ENCODE measurements at regions of chr6 and their contacts with region 1.

Region 1: DNA sequence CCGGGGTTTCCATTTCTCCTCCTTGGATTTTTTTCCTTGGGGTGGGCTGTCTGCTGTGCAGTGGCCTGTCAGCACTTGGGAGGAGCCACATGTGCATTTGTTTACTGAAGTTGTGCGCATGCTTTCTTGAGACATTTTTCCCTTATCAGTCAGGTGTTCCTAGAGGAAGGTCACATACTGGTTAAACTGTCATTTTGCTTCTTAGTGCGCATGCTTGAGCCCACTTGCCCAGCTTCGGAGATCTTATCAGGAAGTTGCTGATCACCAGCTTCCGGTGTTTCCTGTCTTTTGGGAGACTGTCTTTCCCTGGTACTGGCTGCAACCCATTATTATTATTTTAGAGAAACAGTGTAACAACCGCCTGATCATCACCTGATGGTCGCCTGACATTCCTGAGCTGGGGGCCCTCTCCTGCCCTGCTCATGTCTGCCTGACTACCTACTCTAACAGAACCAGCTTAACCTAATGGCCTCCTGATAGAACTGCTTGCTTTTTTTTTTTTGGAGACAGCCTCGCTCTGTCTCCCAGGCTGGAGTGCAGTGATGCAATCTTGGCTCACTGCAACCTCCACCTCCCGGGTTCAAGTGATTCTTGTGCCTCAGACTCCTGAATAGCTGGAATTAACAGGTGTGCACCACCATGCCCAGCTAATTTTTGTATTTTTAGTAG is 378 bp upstream of the ERVFRD-1 start:
- DNase-seq: no peak
- CTCF ChIP-seq: no peak

Region 2: GRCh38 chr6:11093589-11094410 is 18.1 kb before region 1 on chr6 and contains the start of gene SMIM13:
- CTCF ChIA-PET with region 1: interaction called, 13 read pairs
- POLR2A ChIA-PET with region 1: no interaction called
- DNase-seq: peak; percentile 97
- CTCF ChIP-seq: peak; percentile 64

Region 3: DNA sequence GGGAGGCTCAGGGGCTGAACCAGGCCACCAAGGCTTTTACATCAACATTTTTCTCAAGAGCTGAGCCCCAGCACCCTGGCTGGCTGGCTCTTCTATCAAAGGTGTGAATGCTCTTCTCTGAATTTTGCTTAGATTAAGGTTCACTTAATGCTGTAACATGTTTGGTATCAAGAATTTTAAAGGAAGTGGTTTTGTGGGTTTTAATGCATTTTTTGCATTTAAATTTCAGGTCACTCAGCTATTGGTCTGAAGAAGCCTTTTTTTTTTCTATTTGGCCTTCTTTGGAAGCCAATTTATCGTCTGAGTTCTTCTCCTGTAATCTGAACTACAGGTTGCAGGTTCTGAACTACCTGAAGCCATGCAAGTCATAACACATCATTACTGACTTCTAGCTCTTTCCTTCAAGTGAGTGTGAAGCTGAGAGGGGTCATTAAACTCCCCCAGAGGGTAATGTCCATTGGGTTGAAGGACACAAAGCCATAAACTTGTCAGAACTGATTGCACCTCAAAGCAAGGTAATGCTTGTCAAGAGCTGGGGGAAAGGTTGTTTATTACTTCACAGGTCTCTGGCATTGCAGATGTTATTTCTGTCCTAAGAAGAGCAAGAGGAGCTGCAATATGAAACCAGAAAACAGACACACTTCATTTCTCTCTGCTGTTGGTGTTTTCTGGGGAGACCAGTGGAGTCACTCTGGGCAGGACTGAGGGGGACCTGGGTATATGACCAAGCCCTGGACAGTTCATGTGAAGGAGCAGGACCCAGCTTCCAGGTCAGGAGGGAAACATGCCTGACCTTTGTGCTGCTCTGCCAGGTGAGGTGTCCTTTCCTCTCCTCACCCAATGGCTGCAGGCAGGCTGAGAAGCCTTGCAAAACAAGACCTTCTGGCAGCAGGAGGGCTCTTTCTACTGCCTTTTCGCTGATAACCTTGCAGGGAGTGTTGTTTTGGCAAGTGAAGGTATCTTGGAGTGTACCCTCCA is 146.6 kb after region 1 on chr6:
- CTCF ChIA-PET with region 1: no interaction called
- POLR2A ChIA-PET with region 1: no interaction called
- DNase-seq: no peak
- CTCF ChIP-seq: no peak